ENCODE measurements at regions of chr1 and their contacts with region 1.

Region 1: DNA sequence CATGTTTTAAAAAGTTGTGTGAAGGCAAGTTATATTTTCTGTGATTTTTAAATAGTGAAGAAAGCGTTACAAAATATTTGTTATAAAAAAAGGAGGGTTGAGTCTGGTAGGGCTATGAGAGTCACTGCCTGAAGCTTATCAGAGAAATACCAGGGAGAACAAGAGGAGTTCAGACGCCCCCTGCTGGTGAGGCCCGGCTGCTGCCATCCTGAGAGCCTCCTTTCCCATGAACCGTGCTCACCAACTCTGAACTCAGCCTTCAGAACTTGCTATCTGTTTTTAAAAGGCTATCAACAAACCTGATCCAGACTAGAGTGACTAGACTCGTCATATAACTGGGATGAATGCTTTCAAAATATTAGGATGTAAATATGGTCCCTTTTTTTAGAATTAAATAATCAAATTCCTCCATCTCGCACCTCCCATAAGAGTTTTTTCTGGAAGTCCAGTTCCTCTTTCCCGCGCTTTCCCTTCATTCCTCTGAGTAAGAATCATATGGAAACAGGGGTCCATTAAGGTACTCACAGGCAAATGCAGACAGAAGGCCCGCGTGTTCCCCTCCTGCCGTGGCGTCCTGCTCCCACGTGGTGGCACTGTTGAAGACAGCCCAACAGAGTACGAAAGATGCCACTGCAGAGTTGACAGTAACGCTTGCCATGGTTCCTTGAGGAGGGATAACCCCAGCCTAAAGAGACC is 26.2 kb upstream of the SPATA6 start:
- DNase-seq: peak; percentile 84
- H3K4me3 ChIP-seq: no peak overlapping the region
- H3K27ac ChIP-seq: no peak overlapping the region
- H3K4me1 ChIP-seq: peaks cover 9% of the 10 kb centered on the region
- H3K27me3 ChIP-seq: no peaks in the 10 kb centered on the region
- CTCF ChIP-seq: peak; percentile 92

Region 2: GRCh38 chr1:48069662-48070432 is 428.4 kb before region 1 on chr1:
- CTCF ChIA-PET with region 1: no interaction called
- POLR2A ChIA-PET with region 1: no interaction called
- intact Hi-C with region 1: no loop called
- DNase-seq: peak; percentile 29
- H3K4me3 ChIP-seq: no peak overlapping the region
- H3K27ac ChIP-seq: no peak overlapping the region
- H3K4me1 ChIP-seq: no peaks in the 10 kb centered on the region
- H3K27me3 ChIP-seq: no peaks in the 10 kb centered on the region
- CTCF ChIP-seq: no peak

Region 3: DNA sequence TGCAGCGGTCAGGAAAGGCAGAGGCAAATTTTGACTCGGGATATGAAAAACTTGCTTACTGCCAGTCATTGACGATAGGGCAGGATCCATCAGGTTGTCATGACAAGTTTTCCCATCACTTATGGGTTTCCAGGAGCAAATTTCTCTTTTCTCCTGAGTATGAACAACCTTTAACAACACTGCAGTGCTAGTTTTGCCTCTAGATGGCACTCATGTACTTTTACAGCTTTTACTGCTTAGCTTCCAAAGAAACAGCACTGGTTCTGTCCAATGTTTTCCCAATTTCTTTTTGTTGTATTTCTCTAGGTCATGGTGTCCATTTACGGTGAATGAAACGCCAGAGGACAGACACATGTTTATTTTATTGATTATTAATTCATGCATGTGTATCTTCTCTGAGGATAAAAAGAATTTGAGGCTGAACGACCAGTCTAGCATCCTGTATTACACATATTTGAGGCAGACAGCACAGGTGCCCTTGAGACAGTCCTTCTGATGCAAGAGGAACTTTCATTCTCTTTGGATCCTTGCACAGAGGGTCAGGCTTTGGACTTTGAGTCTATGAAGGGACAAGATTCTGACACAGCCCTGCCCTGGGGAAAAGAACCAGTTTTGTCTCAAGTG is 388.7 kb before region 1 on chr1:
- CTCF ChIA-PET with region 1: no interaction called
- POLR2A ChIA-PET with region 1: no interaction called
- intact Hi-C with region 1: loop called (anchors 5 kb)
- DNase-seq: peak; percentile 42
- H3K4me3 ChIP-seq: no peak overlapping the region
- H3K27ac ChIP-seq: no peak overlapping the region
- H3K4me1 ChIP-seq: no peaks in the 10 kb centered on the region
- H3K27me3 ChIP-seq: peaks cover 20% of the 10 kb centered on the region
- CTCF ChIP-seq: peak; percentile 79

Region 4: DNA sequence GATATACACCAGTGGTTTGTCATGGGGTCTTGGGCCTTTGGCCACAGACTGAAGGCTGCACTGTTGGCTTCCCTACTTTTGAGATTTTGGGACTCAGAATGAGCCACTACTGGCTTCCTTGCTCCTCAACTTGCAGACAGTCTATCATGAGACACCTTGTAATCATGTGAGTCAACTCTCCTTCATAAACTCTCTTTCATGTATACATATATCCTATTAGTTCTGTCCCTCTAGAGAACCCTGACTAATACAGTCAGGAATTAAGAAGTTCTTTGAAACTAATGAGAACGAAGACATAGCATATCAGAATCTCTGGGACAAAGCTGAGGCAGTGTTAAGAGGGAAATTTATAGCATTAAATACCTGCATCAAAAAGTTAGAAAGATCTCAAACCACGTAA is 164.9 kb before region 1 on chr1:
- CTCF ChIA-PET with region 1: no interaction called
- POLR2A ChIA-PET with region 1: no interaction called
- intact Hi-C with region 1: no loop called
- DNase-seq: no peak
- H3K4me3 ChIP-seq: no peak overlapping the region
- H3K27ac ChIP-seq: no peak overlapping the region
- H3K4me1 ChIP-seq: no peaks in the 10 kb centered on the region
- H3K27me3 ChIP-seq: no peaks in the 10 kb centered on the region
- CTCF ChIP-seq: no peak

Region 5: GRCh38 chr1:48530727-48531351 is 32.6 kb after region 1 on chr1:
- CTCF ChIA-PET with region 1: interaction called, 7 read pairs
- POLR2A ChIA-PET with region 1: no interaction called
- intact Hi-C with region 1: loop called (anchors 1 kb)
- DNase-seq: peak; percentile 75
- H3K4me3 ChIP-seq: no peak overlapping the region
- H3K27ac ChIP-seq: no peak overlapping the region
- H3K4me1 ChIP-seq: peaks cover 24% of the 10 kb centered on the region
- H3K27me3 ChIP-seq: no peaks in the 10 kb centered on the region
- CTCF ChIP-seq: peak; percentile 96

Measured in A673 (cell line).